Right lobe of liver (tissue), 6 donors: ENCODE measurements at regions of chr14 and their contacts with region 1.

Region 1: DNA sequence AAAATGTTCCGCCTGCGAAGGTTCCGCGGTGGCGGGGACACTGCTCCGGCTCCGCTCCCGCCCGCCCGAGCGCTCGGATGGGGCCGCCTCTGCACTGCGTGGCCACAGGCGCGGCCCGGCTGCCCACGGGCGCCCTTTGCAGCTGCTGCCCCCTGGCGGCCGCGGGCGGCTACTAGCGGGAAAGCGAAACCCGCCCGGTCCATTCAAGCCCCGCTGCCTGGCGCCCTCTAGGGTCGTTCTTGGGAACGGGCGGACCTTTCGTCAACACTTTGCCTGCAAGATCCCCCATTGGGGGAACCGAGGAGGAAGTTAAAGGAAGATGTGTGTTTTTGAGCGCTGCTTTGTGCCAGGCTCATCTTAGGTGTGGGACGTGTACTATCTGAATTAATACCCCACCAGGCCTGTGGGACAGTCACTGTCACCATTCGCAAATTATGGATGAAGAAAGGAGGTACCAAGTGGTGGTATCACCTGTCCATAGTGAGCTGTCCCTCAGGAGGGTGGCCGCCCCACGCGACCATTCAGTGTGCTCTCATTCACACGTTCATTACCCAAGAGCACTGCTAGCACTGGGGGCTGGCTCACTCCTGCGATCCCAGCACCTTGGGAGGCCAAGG is 19.4 kb downstream of the GPR132 start:
- DNase-seq: peak; percentile 91 to 92 (median 91)
- ATAC-seq: peak; percentile 98 to 100 (median 99)
- H3K4me3 ChIP-seq: no peak overlapping the region
- H3K27ac ChIP-seq: no peak overlapping the region
- H3K4me1 ChIP-seq: peaks cover 0 to 2% (median 0%) of the 10 kb centered on the region in 4 donors
- H3K27me3 ChIP-seq: no peaks in the 10 kb centered on the region
- CTCF ChIP-seq: peak; percentile 100
- POLR2A ChIP-seq: no peak

Region 2: DNA sequence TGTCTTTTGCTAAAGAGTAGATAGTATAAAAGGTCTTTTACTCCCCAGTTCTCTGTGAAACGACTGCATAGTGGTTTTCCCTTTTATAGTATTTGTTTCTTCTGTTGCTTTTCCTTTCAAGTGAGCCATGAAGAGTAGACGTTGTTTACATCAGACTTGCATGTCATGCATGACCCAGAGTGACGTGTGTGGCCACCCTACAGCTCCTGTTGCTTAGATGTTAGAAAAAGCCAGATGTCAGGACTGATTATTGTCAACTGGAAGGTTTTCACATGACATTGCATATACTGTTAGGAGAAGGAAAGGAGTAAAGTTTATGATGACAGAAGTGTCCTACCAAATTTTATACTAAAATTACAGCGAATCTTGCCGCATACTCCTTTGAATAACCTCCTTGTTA is 1102.1 kb before region 1 on chr14:
- intact Hi-C with region 1: loop called in 1 of 2 experiments (anchors 10 kb)
- DNase-seq: no peak
- ATAC-seq: no peak
- H3K4me3 ChIP-seq: no peak overlapping the region
- H3K27ac ChIP-seq: no peak overlapping the region
- H3K4me1 ChIP-seq: no peaks in the 10 kb centered on the region
- H3K27me3 ChIP-seq: peaks cover 3 to 6% of the 10 kb centered on the region in 2 donors
- CTCF ChIP-seq: no peak
- POLR2A ChIP-seq: no peak

Region 3: GRCh38 chr14:104976198-104977007 is 69.4 kb before region 1 on chr14:
- intact Hi-C with region 1: loop called (anchors 5 kb)
- DNase-seq: peak; percentile 91 to 94 (median 93)
- ATAC-seq: peak; percentile 68 to 86 (median 80)
- H3K4me3 ChIP-seq: no peak overlapping the region
- H3K27ac ChIP-seq: no peak overlapping the region
- H3K4me1 ChIP-seq: peaks cover 0 to 23% (median 1%) of the 10 kb centered on the region in 4 donors
- H3K27me3 ChIP-seq: no peaks in the 10 kb centered on the region
- CTCF ChIP-seq: peak; percentile 94 to 98 (median 96)
- POLR2A ChIP-seq: no peak